Tibial artery (tissue), 4 donors: ENCODE measurements at regions of chr11 and their contacts with region 1.

Region 1: DNA sequence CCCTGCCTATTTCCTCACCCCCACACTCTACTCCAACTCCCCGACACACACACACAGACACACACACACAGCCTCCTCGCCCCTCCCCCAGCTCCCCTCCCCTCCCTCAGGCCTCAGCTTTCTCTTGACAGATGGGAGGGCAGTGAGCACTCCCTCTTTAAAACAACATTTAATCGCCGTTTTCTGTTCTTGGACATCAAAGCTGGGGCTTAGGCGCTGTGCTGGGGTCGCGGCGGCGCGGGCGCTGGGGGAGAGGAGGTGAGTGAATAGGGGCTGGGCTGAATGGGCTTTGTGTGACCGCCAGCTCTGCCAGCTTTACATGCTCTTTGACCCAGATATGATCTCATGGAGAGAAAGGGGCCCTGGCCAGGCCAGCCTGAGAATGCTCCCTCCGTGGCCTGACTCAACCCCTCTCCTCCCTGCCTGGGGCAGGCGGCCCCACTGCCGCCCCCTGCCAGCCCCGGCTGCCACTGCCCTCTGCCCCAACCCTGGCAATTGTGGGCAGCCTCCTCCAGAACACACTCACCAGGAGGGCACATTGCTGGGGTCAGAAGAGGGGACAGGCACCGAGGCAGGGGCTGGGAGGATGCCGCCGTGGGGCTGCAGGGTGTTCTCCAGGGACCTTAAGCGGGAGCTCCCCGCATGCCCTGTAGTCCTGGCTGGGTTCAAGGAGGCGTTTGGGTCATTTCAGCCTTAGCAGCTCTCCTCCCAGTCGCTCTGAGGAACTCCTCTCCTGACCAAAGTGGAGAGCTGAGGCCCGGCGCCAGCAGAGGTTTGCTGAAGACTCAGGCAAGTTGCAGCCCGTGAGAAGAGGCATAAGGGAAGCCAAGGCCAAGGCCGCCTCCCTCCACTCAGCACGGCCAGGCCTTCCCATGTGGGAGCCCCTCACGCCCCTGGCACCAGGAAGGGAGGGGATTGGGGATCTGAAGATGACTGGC is 38.3 kb upstream of the NNMT start:
- DNase-seq: peak; percentile 78 to 86
- H3K4me3 ChIP-seq: peak overlapping the region; percentile 8 to 16
- H3K27ac ChIP-seq: peak overlapping the region; percentile 67 to 75
- H3K4me1 ChIP-seq: peaks cover 0 to 94% (median 49%) of the 10 kb centered on the region in 4 donors
- H3K27me3 ChIP-seq: no peaks in the 10 kb centered on the region
- CTCF ChIP-seq: peak; percentile 24 to 34

Region 2: DNA sequence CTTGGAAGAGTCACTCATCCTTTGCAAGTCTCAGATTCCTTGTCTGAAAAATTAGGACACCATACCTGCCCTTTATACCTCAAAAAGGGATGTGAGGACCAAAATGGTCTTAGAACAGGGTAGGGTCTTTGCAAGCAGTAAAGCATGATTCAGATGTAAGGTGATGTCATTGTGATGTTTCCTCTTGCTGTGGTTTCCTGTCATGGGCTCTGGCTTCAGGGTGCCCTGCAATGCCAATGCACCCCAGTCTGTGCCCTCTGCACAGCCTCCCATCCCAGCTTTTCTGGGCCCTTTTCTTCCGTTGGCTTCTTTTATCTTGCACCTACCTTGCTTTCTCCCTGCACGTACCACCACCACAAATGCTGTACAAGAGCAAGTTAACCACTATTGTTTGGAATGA is 49.5 kb before region 1 on chr11:
- intact Hi-C with region 1: loop called (anchors 10 kb)
- DNase-seq: no peak
- H3K4me3 ChIP-seq: no peak overlapping the region
- H3K27ac ChIP-seq: peak overlapping the region in 1 of 2 donors; percentile 36
- H3K4me1 ChIP-seq: peaks cover 0 to 98% (median 52%) of the 10 kb centered on the region in 4 donors
- H3K27me3 ChIP-seq: no peaks in the 10 kb centered on the region
- CTCF ChIP-seq: no peak